Activated CD4-positive, alpha-beta memory T cell treated with anti-CD3 and anti-CD28 coated beads, Interleukin-2, amount 10 ng/mL, durations not matched to agents 7 days and 5 days (primary cell): ENCODE measurements at regions of chr12 and their contacts with region 1.

Region 1: GRCh38 chr12:25364529-25365339 is 114.0 kb upstream of the KRAS start:
- DNase-seq: peak; percentile 49
- H3K4me3 Mint-ChIP-seq: no peak overlapping the region
- H3K27ac Mint-ChIP-seq: peak overlapping the region; percentile 33
- H3K4me1 Mint-ChIP-seq: peaks cover 16% of the 10 kb centered on the region
- H3K27me3 Mint-ChIP-seq: peaks cover 5% of the 10 kb centered on the region

Region 2: GRCh38 chr12:25241167-25242020 is 123.3 kb before region 1 on chr12:
- CTCF ChIA-PET with region 1: interaction called, 11 read pairs
- POLR2A ChIA-PET with region 1: interaction called, 3 read pairs
- DNase-seq: no peak
- H3K4me3 Mint-ChIP-seq: no peak overlapping the region
- H3K27ac Mint-ChIP-seq: no peak overlapping the region
- H3K4me1 Mint-ChIP-seq: peaks cover 24% of the 10 kb centered on the region
- H3K27me3 Mint-ChIP-seq: no peaks in the 10 kb centered on the region

Region 3: GRCh38 chr12:25328072-25328712 is 36.5 kb before region 1 on chr12:
- CTCF ChIA-PET with region 1: no interaction called
- POLR2A ChIA-PET with region 1: no interaction called
- DNase-seq: no peak
- H3K4me3 Mint-ChIP-seq: no peak overlapping the region
- H3K27ac Mint-ChIP-seq: no peak overlapping the region
- H3K4me1 Mint-ChIP-seq: peaks cover 19% of the 10 kb centered on the region
- H3K27me3 Mint-ChIP-seq: peaks cover 14% of the 10 kb centered on the region

Region 4: DNA sequence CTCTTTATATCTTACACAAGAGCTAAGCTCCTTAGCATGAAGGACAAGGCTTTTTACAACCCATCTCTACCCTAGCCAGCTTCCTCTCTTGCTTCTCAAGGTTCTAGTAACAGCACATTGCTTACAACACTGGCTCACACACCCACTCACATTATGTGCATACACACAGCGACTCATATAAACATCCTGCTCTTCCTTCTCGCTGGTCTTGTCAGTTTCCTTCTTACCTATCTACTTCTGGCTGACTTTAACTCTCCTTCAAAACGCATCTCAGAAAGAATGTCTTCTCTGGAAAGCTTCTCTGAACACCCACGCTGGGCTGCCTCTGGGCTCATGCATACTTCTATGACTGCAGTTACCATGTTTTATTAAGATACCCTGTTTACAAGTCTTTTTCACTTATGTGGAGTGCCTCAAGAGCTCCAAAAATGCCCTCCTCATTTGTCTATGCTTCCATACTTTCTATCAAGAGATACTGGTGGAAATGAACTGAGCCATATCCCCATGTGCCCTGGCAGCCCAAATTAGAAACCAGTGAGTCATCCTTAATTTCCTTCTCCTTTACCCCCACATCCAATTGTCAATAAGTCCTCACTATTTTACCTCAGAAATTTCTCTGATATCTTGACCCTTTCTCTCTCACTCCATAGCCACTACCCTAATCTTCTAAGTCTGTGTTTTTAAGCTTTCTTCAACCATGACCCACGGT is 12.9 kb after region 1 on chr12:
- CTCF ChIA-PET with region 1: interaction called, 5 read pairs
- POLR2A ChIA-PET with region 1: interaction called, 31 read pairs
- DNase-seq: peak; percentile 51
- H3K4me3 Mint-ChIP-seq: no peak overlapping the region
- H3K27ac Mint-ChIP-seq: peak overlapping the region; percentile 51
- H3K4me1 Mint-ChIP-seq: peaks cover 57% of the 10 kb centered on the region
- H3K27me3 Mint-ChIP-seq: no peaks in the 10 kb centered on the region